Tibial artery (tissue), 4 donors: ENCODE measurements at regions of chr18 and their contacts with region 1.

Region 1: GRCh38 chr18:21053127-21053526 is 58.5 kb downstream of the ROCK1 start:
- DNase-seq: no peak
- H3K4me3 ChIP-seq: no peak overlapping the region
- H3K27ac ChIP-seq: peak overlapping the region; percentile 58 to 61
- H3K4me1 ChIP-seq: peaks cover 5 to 92% (median 43%) of the 10 kb centered on the region in 4 donors
- H3K27me3 ChIP-seq: no peaks in the 10 kb centered on the region
- CTCF ChIP-seq: no peak

Region 2: GRCh38 chr18:21004726-21005125 is 48.4 kb before region 1 on chr18:
- intact Hi-C with region 1: loop called (anchors 10 kb)
- DNase-seq: no peak
- H3K4me3 ChIP-seq: no peak overlapping the region
- H3K27ac ChIP-seq: peak overlapping the region; percentile 68 to 69
- H3K4me1 ChIP-seq: peaks cover 0 to 57% (median 14%) of the 10 kb centered on the region in 4 donors
- H3K27me3 ChIP-seq: no peaks in the 10 kb centered on the region
- CTCF ChIP-seq: no peak

Region 3: DNA sequence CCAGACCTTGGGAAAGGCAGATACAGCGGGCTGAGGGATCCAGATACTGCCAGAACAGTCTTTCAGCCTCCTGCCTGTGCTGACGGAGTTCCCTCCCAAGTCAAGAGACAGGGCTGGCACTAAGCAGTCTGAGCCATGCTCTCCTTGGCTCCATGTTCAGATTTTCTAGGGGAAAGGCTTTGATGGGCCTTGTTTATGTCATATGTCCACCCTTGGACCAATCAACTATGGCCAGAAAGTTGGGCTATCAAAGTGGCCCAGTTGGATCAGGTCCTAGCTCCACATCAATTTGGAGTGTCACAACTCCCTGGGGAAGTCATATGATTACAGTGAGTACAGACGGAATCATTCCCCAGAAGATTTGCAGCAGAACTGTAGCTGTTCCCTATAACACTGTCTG is 340.9 kb after region 1 on chr18:
- intact Hi-C with region 1: no loop called
- DNase-seq: peak; percentile 39 to 73
- H3K4me3 ChIP-seq: no peak overlapping the region
- H3K27ac ChIP-seq: peak overlapping the region in 1 of 2 donors; percentile 24
- H3K4me1 ChIP-seq: peaks cover 0 to 13% (median 0%) of the 10 kb centered on the region in 4 donors
- H3K27me3 ChIP-seq: no peaks in the 10 kb centered on the region
- CTCF ChIP-seq: no peak